ENCODE measurements at regions of chr5 and their contacts with region 1.

Region 1: DNA sequence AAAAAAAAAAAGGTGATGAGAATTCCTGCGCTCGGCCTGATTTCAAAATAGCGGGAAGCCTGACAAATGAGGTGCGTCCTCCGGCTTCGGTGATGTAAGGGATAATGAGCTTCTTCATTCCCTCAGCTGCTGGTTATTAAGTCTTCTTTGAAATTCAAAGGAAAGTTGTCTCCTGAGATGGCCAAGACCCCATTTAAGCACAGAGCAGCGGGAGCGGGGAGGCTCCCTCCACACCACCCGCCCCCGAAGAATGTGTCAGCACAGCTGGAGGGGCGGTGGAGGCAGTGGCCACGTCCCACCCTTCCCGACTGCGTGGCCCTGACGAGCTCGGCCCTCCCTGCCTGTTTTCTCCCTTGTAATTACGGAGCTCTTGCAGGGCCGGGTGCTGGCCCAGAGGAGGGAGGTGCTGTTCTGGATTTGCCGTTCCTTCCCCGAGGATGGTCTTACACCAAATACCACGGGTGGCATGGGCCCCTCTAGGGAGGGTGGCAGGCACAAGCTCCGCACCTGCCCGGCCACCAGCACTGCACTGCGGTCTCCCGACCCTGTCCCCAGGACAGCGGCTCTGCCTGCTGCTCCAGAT is 31.0 kb downstream of the SLC9A3 start:
- DNase-seq: no peak
- ATAC-seq: no peak
- H3K4me3 Mint-ChIP-seq: peak overlapping the region; percentile 50
- H3K27ac Mint-ChIP-seq: no peak overlapping the region
- H3K4me1 Mint-ChIP-seq: peaks cover 15% of the 10 kb centered on the region
- H3K27me3 Mint-ChIP-seq: peaks cover 86% of the 10 kb centered on the region
- CTCF ChIP-seq: no peak

Region 2: GRCh38 chr5:368183-369084 is 124.8 kb before region 1 on chr5:
- CTCF ChIA-PET with region 1: no interaction called
- POLR2A ChIA-PET with region 1: no interaction called
- DNase-seq: peak; percentile 8
- ATAC-seq: no peak
- H3K4me3 Mint-ChIP-seq: no peak overlapping the region
- H3K27ac Mint-ChIP-seq: no peak overlapping the region
- H3K4me1 Mint-ChIP-seq: no peaks in the 10 kb centered on the region; the same call in 1 of the 2 replicates
- H3K27me3 Mint-ChIP-seq: no peaks in the 10 kb centered on the region
- CTCF ChIP-seq: no peak

Region 3: GRCh38 chr5:472656-473553 is 20.3 kb before region 1 on chr5:
- CTCF ChIA-PET with region 1: interaction called, 12 read pairs
- POLR2A ChIA-PET with region 1: no interaction called
- DNase-seq: peak; percentile 72
- ATAC-seq: peak; percentile 59
- H3K4me3 Mint-ChIP-seq: peak overlapping the region; percentile 64
- H3K27ac Mint-ChIP-seq: no peak overlapping the region
- H3K4me1 Mint-ChIP-seq: peaks cover 9% of the 10 kb centered on the region
- H3K27me3 Mint-ChIP-seq: peaks cover 49% of the 10 kb centered on the region
- CTCF ChIP-seq: no peak

Measured in WTC11 (cell line).